Activated CD8-positive, alpha-beta T cell treated with anti-CD3 and anti-CD28 coated beads, Interleukin-2, amount 10 ng/mL, durations not matched to agents 7 days and 5 days (primary cell): ENCODE measurements at regions of chr1 and their contacts with region 1.

Region 1: DNA sequence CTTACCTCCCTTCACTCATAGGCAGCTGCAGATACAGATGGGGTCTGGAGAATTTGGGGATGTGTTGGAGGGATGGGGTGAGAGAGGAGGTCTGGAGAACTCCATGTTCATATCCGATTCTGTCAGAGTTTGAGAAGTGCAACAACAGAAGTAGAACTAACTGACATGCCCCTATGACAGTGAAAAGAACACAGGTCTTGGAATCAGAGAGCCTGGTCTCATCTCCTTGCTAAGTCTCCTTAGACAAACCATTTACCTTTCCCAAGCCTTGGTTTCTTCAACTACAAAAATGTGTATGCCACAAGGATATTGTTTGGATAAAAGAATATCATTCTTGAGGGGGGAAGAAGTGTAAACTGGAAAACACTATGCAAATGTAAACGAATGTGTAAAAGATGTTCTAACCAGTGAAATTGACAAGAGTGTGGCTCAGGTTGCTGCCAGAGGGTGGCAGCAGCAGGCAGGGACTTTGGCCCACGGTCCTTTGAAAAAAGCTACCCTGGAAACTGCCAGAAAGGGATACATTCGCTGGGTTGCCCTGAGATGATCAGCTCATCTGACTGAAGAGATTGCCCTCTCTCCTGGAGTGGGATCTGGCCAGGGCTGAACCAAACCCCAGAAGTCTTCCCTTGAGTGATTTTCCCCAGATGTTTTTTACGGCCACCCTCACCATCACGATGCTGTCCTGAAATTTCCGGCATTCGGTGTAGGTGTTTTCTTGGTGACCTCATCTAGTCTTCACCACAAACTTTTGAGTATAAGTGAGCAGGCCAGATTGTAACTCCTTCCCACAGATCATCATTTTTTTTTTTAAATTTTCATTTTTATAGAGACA is 17.0 kb upstream of the CD2 start:
- DNase-seq: peak; percentile 87
- ATAC-seq: peak; percentile 49
- H3K4me3 Mint-ChIP-seq: peak overlapping the region; percentile 71
- H3K27ac Mint-ChIP-seq: peak overlapping the region; percentile 97
- H3K4me1 Mint-ChIP-seq: peaks cover 61% of the 10 kb centered on the region
- H3K27me3 Mint-ChIP-seq: no peaks in the 10 kb centered on the region

Region 2: GRCh38 chr1:116628448-116628847 is 108.8 kb before region 1 on chr1:
- CTCF ChIA-PET with region 1: no interaction called
- POLR2A ChIA-PET with region 1: no interaction called
- DNase-seq: no peak
- ATAC-seq: no peak
- H3K4me3 Mint-ChIP-seq: no peak overlapping the region
- H3K27ac Mint-ChIP-seq: no peak overlapping the region
- H3K4me1 Mint-ChIP-seq: no peaks in the 10 kb centered on the region
- H3K27me3 Mint-ChIP-seq: peaks cover 14% of the 10 kb centered on the region

Region 3: GRCh38 chr1:116724765-116725375 is 12.4 kb before region 1 on chr1:
- CTCF ChIA-PET with region 1: interaction called, 63 read pairs
- POLR2A ChIA-PET with region 1: interaction called, 7 read pairs
- DNase-seq: peak; percentile 89
- ATAC-seq: peak; percentile 83
- H3K4me3 Mint-ChIP-seq: no peak overlapping the region
- H3K27ac Mint-ChIP-seq: no peak overlapping the region
- H3K4me1 Mint-ChIP-seq: peaks cover 33% of the 10 kb centered on the region
- H3K27me3 Mint-ChIP-seq: no peaks in the 10 kb centered on the region

Region 4: GRCh38 chr1:116769561-116769977 is 32.3 kb after region 1 on chr1:
- CTCF ChIA-PET with region 1: interaction called, 146 read pairs
- POLR2A ChIA-PET with region 1: interaction called, 548 read pairs
- DNase-seq: peak; percentile 90
- ATAC-seq: peak; percentile 79
- H3K4me3 Mint-ChIP-seq: peak overlapping the region; percentile 56
- H3K27ac Mint-ChIP-seq: peak overlapping the region; percentile 99
- H3K4me1 Mint-ChIP-seq: peaks cover 90% of the 10 kb centered on the region
- H3K27me3 Mint-ChIP-seq: no peaks in the 10 kb centered on the region

Region 5: GRCh38 chr1:116806245-116806644 is 69.0 kb after region 1 on chr1:
- CTCF ChIA-PET with region 1: interaction called, 42 read pairs
- POLR2A ChIA-PET with region 1: interaction called, 15 read pairs
- DNase-seq: peak; percentile 56
- ATAC-seq: peak; percentile 35
- H3K4me3 Mint-ChIP-seq: peak overlapping the region; percentile 58
- H3K27ac Mint-ChIP-seq: peak overlapping the region; percentile 92
- H3K4me1 Mint-ChIP-seq: peaks cover 91% of the 10 kb centered on the region
- H3K27me3 Mint-ChIP-seq: no peaks in the 10 kb centered on the region

Region 6: DNA sequence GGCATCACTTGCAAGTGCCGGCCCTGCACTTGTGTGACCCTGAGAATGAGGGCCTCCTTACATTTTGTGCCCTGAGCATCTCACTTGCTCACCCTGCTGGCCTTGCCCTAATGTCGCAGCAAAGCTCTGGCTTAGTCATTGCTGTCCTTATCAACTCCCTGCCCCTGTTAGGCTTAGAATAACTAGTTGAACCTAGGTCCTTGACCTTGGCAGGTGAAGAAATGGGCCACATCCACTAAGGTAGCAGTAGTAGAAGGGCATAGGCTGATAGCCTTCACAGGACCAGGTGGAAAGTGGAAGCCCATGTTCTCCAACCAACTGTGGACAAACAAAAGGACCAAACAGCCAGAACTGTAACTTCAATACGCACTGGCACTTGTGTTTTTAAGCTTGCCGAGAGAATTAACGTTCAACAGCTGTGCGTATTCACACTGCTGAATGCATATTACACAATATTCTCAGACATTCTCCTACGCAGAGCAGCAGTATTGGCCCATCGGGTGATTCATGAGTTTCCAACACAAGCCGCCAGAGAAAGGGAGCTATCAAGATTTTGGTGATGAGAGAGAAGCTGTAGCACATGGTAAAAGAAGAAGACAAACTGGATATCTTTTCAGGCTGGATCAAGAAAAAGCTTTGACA is 144.8 kb after region 1 on chr1:
- CTCF ChIA-PET with region 1: interaction called, 81 read pairs
- POLR2A ChIA-PET with region 1: interaction called, 5 read pairs
- DNase-seq: peak; percentile 65
- ATAC-seq: peak; percentile 35
- H3K4me3 Mint-ChIP-seq: no peak overlapping the region
- H3K27ac Mint-ChIP-seq: no peak overlapping the region
- H3K4me1 Mint-ChIP-seq: peaks cover 9% of the 10 kb centered on the region
- H3K27me3 Mint-ChIP-seq: no peaks in the 10 kb centered on the region

Region 7: GRCh38 chr1:117059678-117060440 is 322.6 kb after region 1 on chr1 and contains the start of gene TTF2:
- CTCF ChIA-PET with region 1: interaction called, 49 read pairs
- POLR2A ChIA-PET with region 1: interaction called, 41 read pairs
- DNase-seq: peak; percentile 99
- ATAC-seq: peak; percentile 94
- H3K4me3 Mint-ChIP-seq: no peak within 1 kb of the TSS
- H3K27ac Mint-ChIP-seq: no peak within 1 kb of the TSS
- H3K4me1 Mint-ChIP-seq: peaks cover 57% of the 10 kb centered on the region
- H3K27me3 Mint-ChIP-seq: no peaks in the 10 kb centered on the region
- total RNA-seq, gene TTF2: 121 to 135 TPM